ENCODE measurements at regions of chr2 and their contacts with region 1.

Region 1: DNA sequence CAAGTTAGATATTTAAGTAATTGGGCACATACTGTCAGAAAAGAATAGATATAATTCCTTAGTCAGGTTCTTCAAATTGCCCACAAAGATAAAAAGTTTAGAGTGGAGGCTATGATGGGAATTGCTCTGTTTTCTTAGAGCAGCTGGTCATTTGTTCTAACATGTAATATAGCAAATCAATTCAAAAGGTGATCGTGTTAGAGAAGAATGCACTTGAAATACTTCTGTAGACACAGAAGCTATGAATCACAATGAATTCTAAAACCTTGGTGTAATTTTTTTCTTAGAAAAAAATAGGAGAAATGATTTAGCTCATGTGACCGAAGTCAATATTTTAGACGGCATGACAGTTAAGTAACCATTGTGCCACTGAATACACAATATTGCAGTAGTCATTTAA is 918.1 kb upstream of the LRATD1 start:
- DNase-seq: no peak
- H3K4me3 Mint-ChIP-seq: no peak overlapping the region
- H3K27ac Mint-ChIP-seq: no peak overlapping the region
- H3K4me1 Mint-ChIP-seq: no peaks in the 10 kb centered on the region
- H3K27me3 Mint-ChIP-seq: no peaks in the 10 kb centered on the region

Region 2: DNA sequence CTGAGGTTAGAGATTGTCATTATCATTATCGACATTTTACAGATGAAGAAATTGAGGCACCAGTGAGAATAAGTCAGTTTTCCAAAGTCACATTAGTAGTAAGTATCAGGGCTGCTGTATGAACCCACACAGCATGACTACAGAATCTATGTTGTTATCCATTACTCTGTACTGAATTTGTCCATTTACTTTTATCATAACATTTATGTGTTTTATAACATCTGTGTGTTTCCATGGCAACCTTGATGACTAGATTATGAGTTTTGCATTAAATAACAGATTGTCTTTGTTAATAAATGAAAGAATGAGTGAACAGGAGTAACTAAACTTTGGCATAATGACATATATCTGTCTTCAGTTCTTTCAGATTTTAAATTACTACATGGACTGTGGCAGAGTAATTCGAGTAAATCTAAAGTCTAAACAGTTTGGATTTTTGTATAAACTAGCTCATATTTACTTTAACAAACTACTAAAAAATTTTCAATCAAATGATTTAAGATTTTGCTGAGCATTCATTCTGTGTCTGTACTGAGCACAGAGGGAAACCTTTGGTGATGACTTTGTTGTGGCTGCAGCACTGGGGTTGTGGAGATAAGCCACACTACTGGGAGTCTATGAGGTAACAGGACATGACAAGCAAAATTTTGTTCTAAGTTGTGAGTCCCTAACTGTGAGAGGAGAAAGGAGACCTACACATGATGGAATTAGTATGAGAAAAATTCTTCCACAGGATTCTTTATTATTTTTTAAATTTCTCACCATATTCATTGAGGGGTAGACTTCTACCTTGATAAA is 15.8 kb before region 1 on chr2:
- CTCF ChIA-PET with region 1: no interaction called
- POLR2A ChIA-PET with region 1: no interaction called
- intact Hi-C with region 1: loop called (anchors 1 kb)
- DNase-seq: no peak
- H3K4me3 Mint-ChIP-seq: no peak overlapping the region
- H3K27ac Mint-ChIP-seq: no peak overlapping the region
- H3K4me1 Mint-ChIP-seq: no peaks in the 10 kb centered on the region
- H3K27me3 Mint-ChIP-seq: no peaks in the 10 kb centered on the region